ENCODE measurements at regions of chr6 and their contacts with region 1.

Region 1: GRCh38 chr6:87929843-87930288 is 117.8 kb upstream of the SPACA1 start:
- DNase-seq: peak; percentile 95
- H3K4me3 ChIP-seq: peak overlapping the region; percentile 10
- H3K27ac ChIP-seq: peak overlapping the region; percentile 99
- H3K4me1 ChIP-seq: peaks cover 91% of the 10 kb centered on the region
- CTCF ChIP-seq: peak; percentile 98

Region 2: GRCh38 chr6:87879132-87879861 is 50.6 kb before region 1 on chr6:
- CTCF ChIA-PET with region 1: interaction called, 3 read pairs
- POLR2A ChIA-PET with region 1: interaction called, 28 read pairs
- intact Hi-C with region 1: no loop called
- DNase-seq: peak; percentile 100
- H3K4me3 ChIP-seq: peak overlapping the region; percentile 11
- H3K27ac ChIP-seq: peak overlapping the region; percentile 99
- H3K4me1 ChIP-seq: peaks cover 78% of the 10 kb centered on the region
- CTCF ChIP-seq: no peak

Region 3: GRCh38 chr6:87914637-87915395 is 15.1 kb before region 1 on chr6:
- CTCF ChIA-PET with region 1: interaction called, 4 read pairs
- POLR2A ChIA-PET with region 1: interaction called, 102 read pairs
- intact Hi-C with region 1: no loop called
- DNase-seq: peak; percentile 58
- H3K4me3 ChIP-seq: no peak overlapping the region
- H3K27ac ChIP-seq: peak overlapping the region; percentile 99
- H3K4me1 ChIP-seq: peaks cover 95% of the 10 kb centered on the region
- CTCF ChIP-seq: no peak

Region 4: DNA sequence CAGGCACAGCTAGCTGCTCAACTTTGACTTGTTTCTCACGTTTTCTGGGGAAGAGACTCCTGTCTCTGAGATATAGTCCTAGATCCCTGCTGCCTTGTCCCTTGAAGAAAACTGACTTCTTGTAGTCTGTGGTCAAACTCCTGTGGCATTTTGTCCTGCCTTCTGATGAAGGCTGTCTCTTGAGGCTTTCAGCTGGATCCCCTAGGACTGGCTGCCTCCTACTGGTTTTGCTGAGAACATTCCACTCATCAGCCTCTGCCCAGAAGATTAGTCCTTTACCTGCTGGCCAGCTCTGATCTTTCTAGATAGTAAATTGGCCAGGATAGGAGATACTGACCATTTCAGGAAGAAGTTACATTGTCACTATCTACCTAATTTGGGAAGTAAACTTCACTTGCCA is 308.2 kb after region 1 on chr6:
- CTCF ChIA-PET with region 1: interaction called, 3 read pairs
- POLR2A ChIA-PET with region 1: no interaction called
- intact Hi-C with region 1: loop called (anchors 1 kb)
- DNase-seq: peak; percentile 74
- H3K4me3 ChIP-seq: no peak overlapping the region
- H3K27ac ChIP-seq: no peak overlapping the region
- H3K4me1 ChIP-seq: peaks cover 17% of the 10 kb centered on the region
- CTCF ChIP-seq: peak; percentile 88

Region 5: DNA sequence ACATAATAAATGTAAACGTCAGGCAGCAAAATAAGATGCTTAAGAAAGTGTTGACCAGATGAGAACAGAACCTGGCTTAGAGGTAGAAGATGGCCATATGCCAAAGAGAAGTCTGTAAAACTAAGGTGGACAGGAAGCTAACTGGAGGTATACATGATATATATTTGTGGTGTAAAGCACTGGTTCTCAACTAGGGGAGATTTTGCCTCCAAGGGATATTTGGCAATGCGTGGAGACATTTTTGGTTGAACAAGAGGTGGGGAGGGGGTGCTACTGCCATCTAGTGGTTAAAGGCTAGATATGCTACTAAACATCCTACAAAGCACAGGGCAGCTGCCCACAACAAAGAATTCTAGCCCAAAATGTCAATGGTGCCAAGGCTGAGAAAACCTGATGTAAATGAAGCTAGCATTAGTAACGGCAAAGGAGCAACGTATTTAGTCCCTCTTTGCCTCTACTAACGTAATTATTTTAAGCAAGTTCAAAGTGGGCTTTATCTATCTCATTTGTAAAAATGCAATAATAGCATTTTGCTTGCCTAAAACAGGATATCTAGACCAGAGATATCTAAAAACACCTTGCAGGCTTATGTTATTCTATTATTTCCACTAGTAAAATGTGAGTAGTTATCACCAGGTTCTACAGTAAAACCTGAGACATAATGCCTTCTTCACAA is 851.0 kb after region 1 on chr6:
- CTCF ChIA-PET with region 1: no interaction called
- POLR2A ChIA-PET with region 1: no interaction called
- intact Hi-C with region 1: loop called (anchors 2 kb)
- DNase-seq: peak; percentile 89
- H3K4me3 ChIP-seq: no peak overlapping the region
- H3K27ac ChIP-seq: no peak overlapping the region
- H3K4me1 ChIP-seq: peaks cover 16% of the 10 kb centered on the region
- CTCF ChIP-seq: peak; percentile 98